Right lobe of liver (tissue), 6 donors: ENCODE measurements at regions of chr10 and their contacts with region 1.

Region 1: DNA sequence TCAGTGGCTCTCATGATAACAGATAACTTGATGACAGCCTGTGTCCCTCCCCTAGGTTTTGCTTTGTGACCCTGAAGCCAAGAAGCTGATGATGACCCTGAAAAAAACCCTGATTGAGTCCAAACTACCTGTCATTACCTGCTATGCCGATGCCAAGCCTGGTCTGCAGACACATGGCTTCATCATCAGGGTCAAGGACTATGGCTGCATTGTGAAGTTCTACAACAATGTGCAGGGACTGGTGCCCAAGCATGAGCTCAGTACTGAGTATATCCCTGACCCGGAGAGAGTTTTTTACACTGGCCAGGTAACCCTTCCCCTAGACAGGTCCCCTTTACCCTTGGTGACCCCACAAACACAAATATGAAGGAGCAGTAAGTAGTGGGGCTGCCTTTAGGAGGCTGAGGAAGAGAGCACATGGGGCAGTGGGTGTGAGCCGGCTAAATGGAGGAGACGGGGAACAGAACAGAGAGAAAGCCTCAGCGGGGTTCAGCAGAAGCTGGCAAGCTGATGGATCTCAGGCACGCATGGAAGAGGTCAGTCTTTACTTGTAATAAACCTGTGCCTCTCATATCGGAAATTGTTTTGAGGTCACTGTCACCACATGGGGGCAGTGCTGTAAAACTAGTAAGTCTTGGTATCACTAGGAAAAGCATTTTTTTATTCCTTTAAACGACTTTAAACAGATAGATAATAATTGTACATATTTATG is 20.2 kb downstream of the PDCD11 start:
- DNase-seq: peak in 2 of 3 donors; percentile 32 to 64
- ATAC-seq: peak; percentile 43 to 52 (median 46)
- H3K4me3 ChIP-seq: no peak overlapping the region
- H3K27ac ChIP-seq: no peak overlapping the region
- H3K4me1 ChIP-seq: peaks cover 0 to 36% (median 13%) of the 10 kb centered on the region in 4 donors
- H3K27me3 ChIP-seq: no peaks in the 10 kb centered on the region
- CTCF ChIP-seq: peak; percentile 59 to 73 (median 64)
- POLR2A ChIP-seq: no peak

Region 2: GRCh38 chr10:103476046-103476995 is 59.7 kb after region 1 on chr10:
- intact Hi-C with region 1: loop called in 1 of 2 experiments (anchors 5 kb)
- DNase-seq: no peak
- ATAC-seq: peak in 1 of 4 donors; percentile 14
- H3K4me3 ChIP-seq: no peak overlapping the region
- H3K27ac ChIP-seq: no peak overlapping the region
- H3K4me1 ChIP-seq: no peaks in the 10 kb centered on the region
- H3K27me3 ChIP-seq: no peaks in the 10 kb centered on the region
- CTCF ChIP-seq: no peak
- POLR2A ChIP-seq: no peak

Region 3: DNA sequence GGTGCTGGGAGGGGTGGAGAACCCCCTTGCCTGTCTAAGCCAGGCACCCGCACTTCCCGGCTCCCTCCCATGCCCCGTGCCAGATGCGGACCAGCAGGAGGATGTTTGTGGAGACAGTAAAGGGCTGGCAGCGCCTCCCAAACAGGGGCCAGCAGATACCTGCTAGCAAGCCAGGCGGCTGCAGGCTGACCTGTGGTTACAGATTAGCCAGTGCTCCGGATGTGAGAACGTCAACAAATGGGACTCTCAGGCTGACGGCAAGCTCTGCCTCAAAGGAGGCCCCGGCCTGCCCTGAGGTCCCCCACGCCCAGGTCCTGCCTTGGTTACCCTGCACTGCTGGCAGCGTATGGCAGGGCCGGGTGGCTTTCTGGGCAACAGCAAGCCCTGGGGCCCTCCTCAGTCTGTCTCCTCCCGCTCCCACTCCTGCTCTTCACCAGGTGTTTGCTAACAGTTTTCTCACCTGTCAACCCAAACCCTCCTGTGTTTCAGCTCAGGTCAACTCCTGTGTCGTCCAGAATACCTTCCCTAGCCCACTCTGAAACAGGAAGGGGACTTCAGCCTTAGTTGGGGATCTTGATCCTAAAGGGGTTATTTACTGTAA is 162.3 kb after region 1 on chr10:
- intact Hi-C with region 1: no loop called
- DNase-seq: peak; percentile 83 to 86 (median 85)
- ATAC-seq: peak; percentile 92 to 96 (median 94)
- H3K4me3 ChIP-seq: no peak overlapping the region
- H3K27ac ChIP-seq: no peak overlapping the region
- H3K4me1 ChIP-seq: peaks cover 0 to 22% (median 9%) of the 10 kb centered on the region in 4 donors
- H3K27me3 ChIP-seq: no peaks in the 10 kb centered on the region
- CTCF ChIP-seq: no peak
- POLR2A ChIP-seq: peak; percentile 36

Region 4: DNA sequence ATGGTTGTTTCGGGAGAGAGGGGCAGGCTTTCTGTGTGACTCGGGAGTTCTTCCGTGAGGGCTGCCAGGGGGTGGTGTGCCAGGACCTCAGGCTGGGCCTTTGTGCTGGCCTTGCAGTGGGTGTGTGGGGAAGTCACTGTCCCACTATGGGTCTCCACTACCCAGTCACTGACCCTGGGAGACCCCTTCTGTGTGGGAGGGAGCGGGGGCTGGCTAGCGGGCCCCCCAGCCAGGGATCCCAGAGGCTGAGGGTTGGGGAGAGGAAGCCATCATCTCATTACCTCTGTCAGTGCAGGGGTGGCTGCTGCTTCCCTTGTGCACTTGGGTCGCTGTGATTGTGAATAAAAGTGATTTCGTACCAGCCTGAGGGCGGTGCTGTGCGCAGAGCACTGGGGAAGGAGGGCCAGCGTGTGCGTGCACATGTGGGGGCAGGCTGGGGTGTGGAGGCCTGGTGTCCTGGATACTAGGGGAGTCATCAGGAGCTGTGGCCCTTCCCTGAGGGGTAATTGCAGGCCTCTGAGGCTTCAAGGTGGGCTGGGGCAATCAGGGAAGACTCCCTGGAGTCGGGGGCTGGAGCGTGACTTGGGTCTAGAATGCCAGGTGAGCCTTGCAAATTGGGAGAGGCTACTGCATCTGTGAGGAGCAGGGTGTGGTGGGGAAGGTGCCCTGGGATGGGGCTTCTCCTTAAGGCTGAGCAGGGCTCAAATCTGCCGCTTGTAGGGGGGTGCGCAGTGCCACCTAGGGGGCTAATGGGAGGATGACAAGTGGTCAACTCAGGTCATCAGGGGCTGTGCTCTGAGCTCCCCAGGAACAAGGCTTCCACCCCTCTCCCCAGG is 175.8 kb after region 1 on chr10:
- intact Hi-C with region 1: loop called in 1 of 2 experiments (anchors 5 kb)
- DNase-seq: peak in 1 of 3 donors; percentile 47
- ATAC-seq: peak; percentile 67 to 73 (median 70)
- H3K4me3 ChIP-seq: no peak overlapping the region
- H3K27ac ChIP-seq: no peak overlapping the region
- H3K4me1 ChIP-seq: peaks cover 0 to 7% (median 0%) of the 10 kb centered on the region in 4 donors
- H3K27me3 ChIP-seq: no peaks in the 10 kb centered on the region
- CTCF ChIP-seq: peak; percentile 42 to 58 (median 56)
- POLR2A ChIP-seq: no peak